Right ventricle myocardium inferior (tissue), 1 donor: ENCODE measurements at regions of chr18 and their contacts with region 1.

Region 1: DNA sequence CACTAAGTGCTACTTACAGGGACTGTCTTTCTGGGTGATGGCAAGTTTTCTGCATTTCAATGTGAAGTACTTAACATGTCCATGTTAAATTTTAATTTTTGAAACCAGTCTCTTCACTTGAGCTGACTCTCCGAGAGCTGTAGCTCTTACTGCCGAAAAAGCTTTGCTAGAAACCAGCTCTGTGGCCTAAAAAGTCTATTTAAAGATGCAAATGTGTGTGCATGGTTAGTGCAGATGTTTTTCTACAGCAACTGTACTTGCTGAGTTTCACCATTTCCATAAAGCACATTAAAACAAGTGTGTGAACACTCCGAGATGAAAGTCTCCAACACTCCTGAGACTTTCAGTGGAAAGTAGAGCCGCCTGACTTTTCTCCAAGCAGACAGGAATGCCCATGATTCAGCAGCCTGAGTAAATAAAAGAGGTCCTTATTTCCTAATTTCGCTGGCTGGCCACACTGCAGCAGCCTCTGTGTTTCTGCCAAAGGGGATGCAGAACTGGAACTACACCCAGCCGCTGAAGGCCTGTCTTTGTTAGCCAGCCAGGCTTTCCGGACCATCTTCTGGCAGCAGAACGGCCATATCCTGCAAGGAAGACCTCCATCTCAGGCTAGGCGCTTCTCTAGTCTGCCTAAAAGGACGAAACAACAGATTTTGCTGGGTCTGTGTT is 121.2 kb downstream of the ZNF521 start:
- DNase-seq: peak; percentile 73
- ATAC-seq: peak; percentile 92

Region 2: DNA sequence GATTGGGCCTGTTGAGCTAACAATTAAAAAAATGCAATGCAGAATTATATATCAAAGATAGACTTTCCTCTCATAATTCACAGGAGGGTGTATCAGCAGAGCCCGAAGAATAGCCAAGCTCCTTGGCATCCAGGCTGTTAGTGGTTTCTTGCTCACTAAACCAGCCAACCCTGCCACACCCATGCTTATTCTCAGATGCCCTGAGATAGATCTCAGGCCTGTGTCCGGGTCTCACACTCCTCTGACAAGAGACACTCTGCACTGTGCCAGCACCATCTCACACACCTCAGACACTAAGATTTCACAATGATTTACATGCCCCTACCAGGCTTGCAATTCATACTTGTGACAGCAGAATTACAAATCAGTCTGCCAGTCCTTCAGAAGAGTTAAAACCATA is 897.7 kb before region 1 on chr18:
- intact Hi-C with region 1: no loop called
- DNase-seq: no peak
- ATAC-seq: no peak

Region 3: DNA sequence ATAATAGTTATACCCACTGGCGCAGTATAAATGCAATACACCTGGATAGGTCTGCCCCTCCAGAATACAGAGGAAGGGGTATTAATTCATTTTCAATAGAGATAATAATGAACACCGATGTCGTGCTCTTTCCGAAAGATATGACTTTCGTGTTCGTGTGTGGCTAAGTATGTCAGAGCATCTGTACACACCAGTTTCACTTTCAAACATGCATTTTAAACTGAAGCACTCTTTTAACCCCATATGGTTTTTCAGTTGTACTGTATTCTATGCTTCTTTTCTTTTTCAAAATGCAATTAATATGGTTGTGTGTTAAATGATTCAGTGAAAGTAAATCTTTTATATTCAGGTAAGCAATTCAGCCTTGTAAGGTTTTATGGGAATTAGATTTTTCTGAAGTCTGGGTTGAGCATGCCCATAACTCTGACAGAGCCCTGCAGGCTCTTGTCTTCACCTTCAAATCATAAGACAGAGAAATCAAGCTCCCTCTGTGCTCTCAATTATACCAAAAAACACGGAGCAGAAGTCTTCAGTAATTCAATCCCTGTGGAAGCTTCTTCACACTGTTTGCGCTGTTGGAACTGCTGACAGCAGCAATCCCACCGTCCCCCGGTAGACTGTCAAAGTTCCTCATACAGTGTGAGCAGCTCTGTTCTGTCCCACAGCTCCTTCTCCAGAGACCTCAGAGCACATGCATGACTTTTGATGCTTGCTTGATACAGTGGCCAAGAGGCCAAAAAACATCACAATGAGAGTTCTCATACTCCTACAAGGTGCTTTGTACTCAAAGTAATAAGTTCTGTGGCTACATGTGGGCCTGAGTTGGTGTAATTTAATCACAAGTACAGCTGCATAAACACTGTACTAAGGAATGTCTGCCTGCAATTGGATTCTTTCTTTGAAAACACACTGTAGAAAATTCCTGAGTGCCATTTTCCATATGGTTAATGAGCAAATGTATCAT is 65.7 kb before region 1 on chr18:
- intact Hi-C with region 1: loop called (anchors 10 kb)
- DNase-seq: no peak
- ATAC-seq: peak; percentile 65

Region 4: DNA sequence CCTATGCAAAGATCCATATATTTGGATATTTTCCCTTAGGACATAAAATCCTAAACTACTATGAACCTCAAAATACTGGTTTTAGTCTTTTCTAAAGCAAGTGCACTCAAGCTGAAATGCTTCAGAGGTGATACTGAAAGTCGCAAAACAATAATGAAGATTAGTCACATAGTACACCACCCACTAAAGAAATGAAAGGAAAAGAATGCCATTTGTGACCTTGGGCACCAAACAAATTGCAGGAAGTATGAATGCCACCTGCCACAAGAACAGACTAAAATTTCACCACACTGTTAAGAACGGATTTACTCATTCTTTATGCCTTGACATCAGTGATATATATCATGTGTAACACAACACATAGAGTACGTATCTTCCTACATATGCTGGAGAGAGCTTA is 40.3 kb before region 1 on chr18:
- intact Hi-C with region 1: no loop called
- DNase-seq: no peak
- ATAC-seq: no peak

Region 5: GRCh38 chr18:25284861-25285550 is 54.2 kb after region 1 on chr18:
- intact Hi-C with region 1: loop called (anchors 2 kb)
- DNase-seq: no peak
- ATAC-seq: peak; percentile 85

Region 6: GRCh38 chr18:25326361-25326952 is 95.7 kb after region 1 on chr18:
- intact Hi-C with region 1: no loop called
- DNase-seq: no peak
- ATAC-seq: peak; percentile 47